SK-MEL-5 (cell line): ENCODE measurements at regions of chr14 and their contacts with region 1.

Region 1: GRCh38 chr14:95561001-95561412 is 26.2 kb downstream of the GLRX5 start:
- DNase-seq: peak; percentile 88

Region 2: GRCh38 chr14:95227279-95227860 is 333.6 kb before region 1 on chr14:
- in situ Hi-C with region 1: no loop called
- DNase-seq: no peak

Region 3: GRCh38 chr14:95294834-95295599 is 266.0 kb before region 1 on chr14:
- in situ Hi-C with region 1: no loop called
- DNase-seq: no peak

Region 4: GRCh38 chr14:95662376-95663186 is 101.6 kb after region 1 on chr14:
- in situ Hi-C with region 1: loop called (anchors 25 kb)
- DNase-seq: no peak

Region 5: DNA sequence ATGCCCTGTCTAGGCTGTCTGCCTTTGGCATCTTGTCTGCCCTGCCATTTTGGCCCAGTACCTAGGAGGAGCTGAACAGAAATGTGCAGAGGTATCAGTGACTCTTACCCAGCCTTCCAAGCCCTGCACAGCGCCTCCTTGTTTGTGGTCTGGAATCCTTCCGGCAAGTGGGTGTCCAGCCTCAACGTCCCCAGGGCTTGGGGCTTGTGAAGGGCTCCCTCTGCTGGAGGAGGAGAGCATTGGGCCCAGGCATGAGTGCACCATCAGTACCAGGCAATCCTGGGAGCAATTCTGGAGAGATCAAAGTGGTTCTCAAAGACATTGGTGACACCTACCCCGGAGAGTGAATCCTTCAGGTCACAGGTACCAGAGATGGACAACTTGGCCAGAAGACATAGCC is 122.8 kb after region 1 on chr14:
- in situ Hi-C with region 1: no loop called
- DNase-seq: peak; percentile 80